CD8-positive, alpha-beta T cell (primary cell): ENCODE measurements at regions of chr5 and their contacts with region 1.

Region 1: DNA sequence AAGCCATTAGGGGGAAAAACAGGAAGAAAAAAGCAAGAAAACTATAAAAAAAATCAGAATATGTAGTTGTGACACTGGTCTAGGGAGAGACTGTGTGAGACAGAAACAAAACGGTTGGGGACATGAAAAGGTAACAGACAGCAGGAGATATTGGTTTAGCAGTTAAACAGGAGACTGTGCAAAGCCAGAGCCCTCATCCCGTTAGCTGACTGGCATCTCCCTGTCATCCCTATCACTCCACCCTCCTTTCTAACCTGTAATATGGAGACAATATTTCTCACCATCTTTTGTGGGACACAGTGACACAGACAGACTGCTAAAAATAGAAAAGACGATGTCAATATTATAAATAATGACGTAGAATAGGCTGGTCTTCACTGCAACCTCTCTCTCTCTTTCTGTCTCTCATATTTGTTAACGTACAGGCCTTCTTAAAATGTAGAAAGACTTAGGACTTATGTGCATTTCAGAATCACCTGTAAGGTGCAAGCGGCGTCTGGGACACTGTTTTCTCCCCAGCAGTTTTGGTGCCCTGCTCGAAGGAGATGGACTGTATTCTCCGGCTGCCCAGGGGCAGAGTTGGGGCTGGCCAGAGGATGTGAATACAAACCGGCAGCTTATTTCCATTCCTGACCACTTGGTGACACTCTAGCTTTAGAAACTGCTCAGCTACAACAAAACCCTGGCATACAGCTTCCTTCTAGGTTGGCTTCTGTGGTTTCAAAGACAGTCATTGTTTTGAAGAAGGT is 190.6 kb downstream of the MAT2B start:
- DNase-seq: peak in 2 of 9 experiments; percentile 22 to 33
- ATAC-seq: no peak
- H3K4me3 ChIP-seq: no peak overlapping the region
- H3K4me3 Mint-ChIP-seq: no peak overlapping the region
- H3K27ac ChIP-seq: no peak overlapping the region
- H3K27ac Mint-ChIP-seq: no peak overlapping the region
- H3K4me1 ChIP-seq: no peaks in the 10 kb centered on the region
- H3K4me1 Mint-ChIP-seq: no peaks in the 10 kb centered on the region
- H3K27me3 ChIP-seq: no peaks in the 10 kb centered on the region
- H3K27me3 Mint-ChIP-seq: peaks cover 4% of the 10 kb centered on the region
- CTCF ChIP-seq: no peak

Region 2: GRCh38 chr5:164504141-164504772 is 808.3 kb after region 1 on chr5:
- CTCF ChIA-PET with region 1: no interaction called
- POLR2A ChIA-PET with region 1: no interaction called
- intact Hi-C with region 1: loop called in 1 of 2 experiments (anchors 5 kb)
- DNase-seq: peak in 2 of 9 experiments; percentile 15 to 34
- ATAC-seq: no peak
- H3K4me3 ChIP-seq: no peak overlapping the region
- H3K4me3 Mint-ChIP-seq: no peak overlapping the region
- H3K27ac ChIP-seq: no peak overlapping the region
- H3K27ac Mint-ChIP-seq: no peak overlapping the region
- H3K4me1 ChIP-seq: no peaks in the 10 kb centered on the region
- H3K4me1 Mint-ChIP-seq: no peaks in the 10 kb centered on the region
- H3K27me3 ChIP-seq: no peaks in the 10 kb centered on the region
- H3K27me3 Mint-ChIP-seq: no peaks in the 10 kb centered on the region
- CTCF ChIP-seq: no peak